PC-3 (cell line): ENCODE measurements at regions of chr11 and their contacts with region 1.

Region 1: DNA sequence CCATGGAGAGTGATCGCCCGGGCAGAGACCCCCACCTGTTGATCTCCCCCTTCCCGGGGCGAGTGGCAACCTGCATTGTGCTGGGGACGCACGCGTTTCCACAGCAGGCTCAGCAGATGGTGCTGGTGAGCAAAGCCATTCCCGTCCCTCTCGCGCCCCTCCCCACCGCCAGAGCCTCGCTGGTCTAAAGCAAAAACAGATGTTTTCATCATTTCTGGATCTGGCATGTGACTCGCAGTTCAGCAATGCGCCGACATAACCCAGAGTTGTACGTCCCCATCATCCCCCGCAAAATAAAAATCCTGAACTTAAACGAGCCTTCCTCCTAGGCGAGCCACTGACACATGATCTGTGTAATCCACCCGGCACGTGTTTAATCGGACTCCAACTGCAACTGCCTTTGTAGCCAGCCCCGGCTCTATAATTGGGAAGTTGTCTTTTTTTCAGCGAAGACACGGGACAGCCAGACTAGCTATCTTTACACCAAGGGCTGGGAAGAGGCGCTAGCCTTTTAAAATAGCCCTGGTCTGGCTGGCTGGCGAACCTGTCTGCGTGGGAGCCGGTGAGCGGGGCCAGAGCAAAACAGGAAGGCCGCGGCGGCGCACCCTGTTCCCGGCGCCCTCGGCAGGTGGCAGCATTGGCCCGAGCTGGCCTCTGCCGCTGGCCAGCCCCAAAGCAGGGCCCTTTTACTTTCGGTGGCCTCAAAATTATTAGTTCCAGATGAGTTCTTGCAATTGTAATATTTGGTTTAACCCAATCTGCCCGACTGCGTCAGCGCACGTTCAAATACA is 203.0 kb upstream of the SORL1-AS1 start:
- DNase-seq: peak; percentile 89
- ATAC-seq: peak; percentile 72
- H3K4me3 ChIP-seq: peak overlapping the region; percentile 70
- H3K27ac ChIP-seq: peak overlapping the region; percentile 76
- H3K4me1 ChIP-seq: peaks cover 29% of the 10 kb centered on the region
- H3K27me3 ChIP-seq: no peaks in the 10 kb centered on the region
- CTCF ChIP-seq: peak; percentile 78

Region 2: GRCh38 chr11:121613724-121614123 is 42.0 kb before region 1 on chr11:
- CTCF ChIA-PET with region 1: interaction called, 4 read pairs
- POLR2A ChIA-PET with region 1: no interaction called
- intact Hi-C with region 1: loop called (anchors 1 kb)
- DNase-seq: no peak
- ATAC-seq: peak; percentile 5; the same call in 1 of the 2 replicates
- H3K4me3 ChIP-seq: no peak overlapping the region
- H3K27ac ChIP-seq: no peak overlapping the region
- H3K4me1 ChIP-seq: peaks cover 27% of the 10 kb centered on the region
- H3K27me3 ChIP-seq: no peaks in the 10 kb centered on the region
- CTCF ChIP-seq: no peak

Region 3: GRCh38 chr11:121892131-121892681 is 236.5 kb after region 1 on chr11:
- CTCF ChIA-PET with region 1: no interaction called
- POLR2A ChIA-PET with region 1: no interaction called
- intact Hi-C with region 1: loop called (anchors 10 kb)
- DNase-seq: peak; percentile 42
- ATAC-seq: no peak
- H3K4me3 ChIP-seq: no peak overlapping the region
- H3K27ac ChIP-seq: no peak overlapping the region
- H3K4me1 ChIP-seq: peaks cover 61% of the 10 kb centered on the region
- H3K27me3 ChIP-seq: no peaks in the 10 kb centered on the region
- CTCF ChIP-seq: no peak

Region 4: GRCh38 chr11:122085264-122085663 is 429.5 kb after region 1 on chr11:
- CTCF ChIA-PET with region 1: interaction called, 3 read pairs
- POLR2A ChIA-PET with region 1: no interaction called
- intact Hi-C with region 1: loop called (anchors 1 kb)
- DNase-seq: peak; percentile 71
- ATAC-seq: peak; percentile 17
- H3K4me3 ChIP-seq: no peak overlapping the region
- H3K27ac ChIP-seq: no peak overlapping the region
- H3K4me1 ChIP-seq: peaks cover 4% of the 10 kb centered on the region; the same call in 1 of the 2 replicates
- H3K27me3 ChIP-seq: no peaks in the 10 kb centered on the region
- CTCF ChIP-seq: no peak

Region 5: DNA sequence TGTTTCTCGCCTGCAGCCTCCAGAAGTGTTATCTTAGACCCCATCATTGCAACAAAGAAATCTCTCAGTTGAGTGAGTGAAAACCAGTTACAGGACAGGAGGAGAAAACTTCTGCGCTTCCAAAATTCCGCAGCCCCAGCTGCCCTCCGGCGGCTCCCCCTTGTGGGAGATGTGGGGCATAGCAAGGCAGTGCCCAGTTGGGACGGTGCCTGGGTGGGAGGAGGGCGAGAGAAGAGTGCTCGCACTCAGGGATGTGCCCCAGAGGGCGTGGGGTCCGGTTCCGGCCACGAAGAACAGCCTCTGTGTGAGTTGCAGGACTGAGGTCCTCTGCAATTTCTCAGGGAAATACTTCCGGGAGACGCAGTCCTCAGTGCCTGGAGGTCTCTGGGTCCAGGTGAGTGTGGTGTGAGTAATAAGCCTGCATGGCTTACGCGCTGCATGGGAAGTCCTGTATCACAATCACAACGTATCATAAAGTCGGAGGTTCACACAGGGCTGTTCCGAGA is 547.3 kb after region 1 on chr11:
- CTCF ChIA-PET with region 1: no interaction called
- POLR2A ChIA-PET with region 1: no interaction called
- intact Hi-C with region 1: loop called (anchors 1 kb)
- DNase-seq: peak; percentile 95
- ATAC-seq: peak; percentile 72
- H3K4me3 ChIP-seq: peak overlapping the region; percentile 70
- H3K27ac ChIP-seq: peak overlapping the region; percentile 94
- H3K4me1 ChIP-seq: peaks cover 40% of the 10 kb centered on the region
- H3K27me3 ChIP-seq: no peaks in the 10 kb centered on the region
- CTCF ChIP-seq: peak; percentile 99